ENCODE measurements at regions of chr16 and their contacts with region 1.

Region 1: GRCh38 chr16:87086156-87086555 is 231.0 kb downstream of the C16orf95 start:
- DNase-seq: peak; percentile 75
- H3K4me3 ChIP-seq: no peak overlapping the region
- CTCF ChIP-seq: no peak

Region 2: GRCh38 chr16:86931399-86931941 is 154.7 kb before region 1 on chr16:
- in situ Hi-C with region 1: no loop called
- DNase-seq: peak; percentile 87
- H3K4me3 ChIP-seq: peak overlapping the region; percentile 0
- CTCF ChIP-seq: no peak

Region 3: GRCh38 chr16:86951831-86952598 is 134.1 kb before region 1 on chr16:
- in situ Hi-C with region 1: no loop called
- DNase-seq: peak; percentile 92
- H3K4me3 ChIP-seq: no peak overlapping the region
- CTCF ChIP-seq: no peak

Region 4: GRCh38 chr16:87028481-87029320 is 57.5 kb before region 1 on chr16:
- in situ Hi-C with region 1: no loop called
- DNase-seq: no peak
- H3K4me3 ChIP-seq: no peak overlapping the region
- CTCF ChIP-seq: no peak

Region 5: GRCh38 chr16:87135246-87136030 is 49.3 kb after region 1 on chr16:
- in situ Hi-C with region 1: loop called (anchors 5 kb)
- DNase-seq: no peak
- H3K4me3 ChIP-seq: no peak overlapping the region
- CTCF ChIP-seq: no peak

Region 6: DNA sequence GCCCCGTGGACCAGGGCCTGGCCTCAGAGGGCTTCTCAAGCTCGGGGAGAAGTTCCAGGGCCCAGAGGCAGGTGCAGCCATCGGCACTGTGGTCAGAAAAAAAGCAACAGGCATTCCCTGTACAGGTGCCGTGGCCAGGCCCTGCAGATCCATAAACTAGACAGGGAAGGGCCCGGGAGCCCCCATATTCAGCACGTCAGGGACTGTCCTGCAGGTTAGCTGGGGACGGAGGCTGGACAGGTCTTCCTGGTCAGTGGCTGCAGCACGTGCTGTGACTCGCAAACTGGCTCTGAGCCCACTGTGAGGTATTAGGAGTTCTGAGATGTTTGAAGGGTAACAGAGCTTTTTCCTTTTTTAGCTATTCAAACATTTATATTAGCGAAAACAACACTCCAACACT is 246.0 kb after region 1 on chr16:
- in situ Hi-C with region 1: no loop called
- DNase-seq: no peak
- H3K4me3 ChIP-seq: no peak overlapping the region
- CTCF ChIP-seq: no peak

Measured in astrocyte of the cerebellum (primary cell).